ENCODE measurements at regions of chr15 and their contacts with region 1.

Region 1: DNA sequence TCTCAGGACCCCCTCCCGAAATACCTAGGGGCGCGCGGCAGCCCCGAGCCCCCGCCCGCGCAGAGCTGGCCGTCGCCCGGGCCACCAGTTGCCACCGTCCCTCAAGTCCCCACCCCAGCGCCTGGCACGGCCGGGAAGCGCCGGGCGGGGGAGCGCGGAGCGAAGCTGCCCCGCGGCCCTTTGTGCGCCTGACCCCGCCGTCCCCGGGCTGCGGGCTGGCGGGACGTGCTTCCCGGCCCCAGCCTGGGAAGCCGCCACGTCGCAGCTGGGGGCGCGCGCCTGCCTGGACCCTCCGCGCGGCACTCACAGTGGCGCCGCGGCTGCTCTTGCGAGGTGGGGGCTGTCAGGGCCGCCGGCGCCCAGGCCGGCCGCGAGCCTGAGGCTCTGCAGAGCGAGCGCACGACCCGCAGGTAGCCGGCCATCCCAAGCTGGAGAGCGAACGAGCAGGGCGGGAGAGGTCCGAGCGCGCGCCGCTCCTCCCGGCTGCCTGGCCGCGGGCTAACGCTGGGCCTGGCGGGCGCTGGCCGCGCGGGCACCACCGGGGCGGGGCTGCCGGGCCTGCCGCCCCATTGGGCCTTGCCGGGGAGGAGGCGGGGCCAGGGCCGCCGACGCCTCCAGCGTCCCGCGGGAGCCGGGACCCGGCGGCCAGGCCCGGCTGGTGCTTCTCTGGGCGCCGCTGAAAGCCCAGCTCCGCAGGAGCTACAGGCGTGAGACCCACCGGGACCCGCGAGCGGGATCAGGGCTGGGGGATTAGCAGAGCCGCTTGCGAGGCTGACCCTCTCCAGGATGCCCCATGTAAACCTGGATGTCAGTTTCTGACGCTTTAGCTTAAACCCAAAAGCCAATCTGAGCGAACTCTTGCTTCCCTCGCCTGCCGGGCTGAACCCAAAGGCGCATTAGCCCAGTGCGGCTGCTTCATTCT is at the start of gene IDH2:
- DNase-seq: peak; percentile 76
- H3K4me3 Mint-ChIP-seq: peak within 1 kb of the TSS; percentile 86
- H3K27ac Mint-ChIP-seq: peak within 1 kb of the TSS; percentile 67
- H3K4me1 Mint-ChIP-seq: peaks cover 50% of the 10 kb centered on the region
- H3K27me3 Mint-ChIP-seq: no peaks in the 10 kb centered on the region
- total RNA-seq, gene IDH2: 170 to 175 TPM

Region 2: GRCh38 chr15:90013503-90013937 is 88.7 kb before region 1 on chr15:
- CTCF ChIA-PET with region 1: no interaction called
- POLR2A ChIA-PET with region 1: no interaction called
- intact Hi-C with region 1: loop called (anchors 5 kb)
- DNase-seq: peak; percentile 15
- H3K4me3 Mint-ChIP-seq: peak overlapping the region; percentile 20
- H3K27ac Mint-ChIP-seq: peak overlapping the region; percentile 57
- H3K4me1 Mint-ChIP-seq: peaks cover 58% of the 10 kb centered on the region
- H3K27me3 Mint-ChIP-seq: no peaks in the 10 kb centered on the region

Region 3: DNA sequence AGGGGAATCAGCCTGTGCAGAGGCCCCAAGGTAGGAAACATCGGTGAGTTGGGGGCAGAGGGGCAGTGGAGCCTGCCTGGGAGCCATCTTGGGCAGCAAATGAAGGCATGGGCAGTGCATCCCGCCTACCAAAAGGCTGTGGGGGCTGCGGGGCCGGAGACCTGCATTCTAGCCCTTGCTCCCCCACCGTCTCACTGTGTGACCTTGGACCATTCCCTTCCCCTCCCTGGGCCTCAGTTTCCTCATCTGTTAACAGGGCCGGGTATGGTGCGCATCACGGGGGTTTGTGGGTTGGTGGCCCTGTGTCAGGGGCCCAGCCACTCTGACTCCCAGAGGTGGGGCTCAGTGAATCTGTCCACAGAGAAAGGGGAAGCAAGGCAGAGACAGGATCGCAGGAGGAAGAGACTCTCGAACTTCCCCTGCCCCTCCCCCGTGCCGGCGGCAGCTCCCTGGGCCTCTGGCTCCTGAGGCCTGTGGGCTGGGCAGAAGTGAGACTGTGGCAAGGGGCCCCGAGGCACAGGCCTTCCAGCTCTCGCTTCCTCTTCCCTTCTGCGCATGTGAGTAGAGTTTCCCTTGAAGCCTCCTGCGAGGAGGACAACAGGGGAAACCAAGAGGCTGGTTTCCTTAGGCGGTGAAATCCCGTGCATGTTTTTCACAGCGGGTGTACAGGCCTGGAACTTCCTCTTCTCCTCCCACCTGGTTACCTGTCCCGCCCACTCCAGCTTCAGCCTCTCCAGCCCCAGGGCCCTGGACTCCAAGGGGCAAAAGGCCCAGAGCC is 42.8 kb before region 1 on chr15:
- CTCF ChIA-PET with region 1: interaction called, 3 read pairs
- POLR2A ChIA-PET with region 1: no interaction called
- intact Hi-C with region 1: loop called (anchors 1 kb)
- DNase-seq: peak; percentile 92
- H3K4me3 Mint-ChIP-seq: peak overlapping the region; percentile 52
- H3K27ac Mint-ChIP-seq: peak overlapping the region; percentile 97
- H3K4me1 Mint-ChIP-seq: peaks cover 58% of the 10 kb centered on the region
- H3K27me3 Mint-ChIP-seq: no peaks in the 10 kb centered on the region

Region 4: GRCh38 chr15:90143166-90143655 is 41.0 kb after region 1 on chr15:
- CTCF ChIA-PET with region 1: interaction called, 8 read pairs
- POLR2A ChIA-PET with region 1: no interaction called
- intact Hi-C with region 1: loop called (anchors 2 kb)
- DNase-seq: peak; percentile 85
- H3K4me3 Mint-ChIP-seq: no peak overlapping the region
- H3K27ac Mint-ChIP-seq: peak overlapping the region; percentile 39
- H3K4me1 Mint-ChIP-seq: peaks cover 20% of the 10 kb centered on the region
- H3K27me3 Mint-ChIP-seq: no peaks in the 10 kb centered on the region

Region 5: DNA sequence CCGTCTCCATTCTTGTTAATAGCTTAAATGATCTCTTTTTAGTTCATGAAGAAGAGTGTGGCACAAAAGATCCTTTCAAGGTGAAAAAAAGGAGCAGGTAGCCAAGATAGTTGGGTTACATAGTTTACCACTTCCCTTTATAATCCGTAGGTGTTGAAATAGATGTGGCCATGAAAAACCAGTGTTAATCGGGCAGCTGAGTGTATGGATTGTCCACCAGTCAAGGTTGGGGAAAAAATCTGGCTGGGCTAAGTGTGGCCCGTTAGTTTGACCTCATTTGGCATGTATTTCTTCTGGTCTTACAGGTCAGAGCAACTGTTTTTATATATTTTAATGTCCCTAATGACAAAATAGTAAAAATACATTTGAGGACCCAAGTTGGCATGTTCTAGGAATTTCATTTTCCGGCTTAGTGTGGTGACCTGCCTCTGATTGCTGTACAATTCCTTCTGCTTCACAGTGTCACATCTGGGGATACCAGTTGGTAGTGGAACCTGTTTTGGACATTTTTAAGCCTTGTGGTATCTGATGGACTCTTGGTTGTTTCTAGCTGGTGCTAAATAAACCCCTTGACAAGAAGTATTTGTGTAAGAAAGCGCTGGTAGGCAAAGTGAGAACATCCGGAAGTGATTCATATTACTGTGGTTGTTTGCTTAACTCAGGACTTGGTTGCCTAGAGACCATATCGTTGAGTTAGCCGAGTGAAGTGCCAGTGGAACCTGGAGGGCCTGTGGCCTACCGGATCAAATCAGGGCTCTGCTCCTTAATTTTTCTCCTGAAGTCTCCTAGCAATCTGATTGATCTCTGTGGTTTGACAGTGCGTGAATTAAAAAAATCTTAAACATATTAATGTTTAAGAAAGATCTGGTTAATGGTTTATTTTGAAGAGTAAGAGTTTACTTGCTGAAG is 298.4 kb after region 1 on chr15:
- CTCF ChIA-PET with region 1: no interaction called
- POLR2A ChIA-PET with region 1: no interaction called
- intact Hi-C with region 1: loop called (anchors 10 kb)
- DNase-seq: peak; percentile 72
- H3K4me3 Mint-ChIP-seq: peak overlapping the region; percentile 57
- H3K27ac Mint-ChIP-seq: peak overlapping the region; percentile 91
- H3K4me1 Mint-ChIP-seq: peaks cover 66% of the 10 kb centered on the region
- H3K27me3 Mint-ChIP-seq: no peaks in the 10 kb centered on the region